ENCODE measurements at regions of chr1 and their contacts with region 1.

Region 1: DNA sequence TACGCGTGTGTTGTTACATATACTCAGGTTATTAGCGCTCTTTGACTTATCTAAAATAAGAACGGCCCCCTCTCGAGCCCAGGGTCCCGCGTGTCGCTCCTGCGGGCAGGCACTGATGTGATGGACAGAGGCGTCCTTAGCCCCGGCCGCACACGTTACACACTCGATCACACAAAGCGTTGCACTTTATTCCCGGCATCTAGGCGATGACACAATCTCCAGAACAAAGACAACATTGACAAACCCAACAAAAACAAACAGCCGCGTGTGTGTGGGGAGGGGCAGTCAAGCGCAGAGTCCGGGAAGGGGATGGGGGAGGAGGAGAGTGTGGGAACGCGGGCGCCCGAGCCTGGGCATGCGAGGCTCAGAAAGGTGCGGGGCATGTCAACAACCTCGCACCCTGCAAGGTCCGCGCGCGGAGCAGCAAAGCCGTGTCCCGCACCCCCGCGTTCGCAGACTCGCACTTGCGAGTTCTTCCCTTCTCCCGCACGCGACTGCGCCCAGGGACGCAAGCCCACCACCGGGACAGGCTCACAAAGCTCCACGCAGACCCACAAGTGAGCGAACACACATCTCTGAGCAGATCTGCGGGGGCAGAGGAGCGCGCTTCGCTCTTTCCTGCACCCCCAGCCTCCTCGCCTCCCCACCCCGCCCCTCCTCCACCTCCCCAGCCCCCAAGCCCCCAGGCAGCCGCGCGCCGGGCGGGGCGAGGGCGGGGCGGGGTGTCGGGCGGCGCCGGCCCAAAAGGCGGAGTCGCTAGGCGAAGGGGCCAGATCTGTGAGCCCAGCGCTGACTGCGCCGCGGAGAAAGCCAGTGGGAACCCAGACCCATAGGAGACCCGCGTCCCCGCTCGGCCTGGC is at the start of gene EFNA1:
- DNase-seq: peak; percentile 78 to 93 (median 86)
- H3K4me3 ChIP-seq: peak within 1 kb of the TSS; percentile 62 to 99 (median 85)
- H3K27ac ChIP-seq: peak within 1 kb of the TSS; percentile 79 to 100 (median 98)
- H3K27me3 ChIP-seq: no peaks in the 10 kb centered on the region
- CTCF ChIP-seq: peak in 8 of 56 donors; percentile 4 to 24 (median 6)
- total RNA-seq, gene EFNA1: 8.7 to 144 (median 30.1) TPM

Region 2: DNA sequence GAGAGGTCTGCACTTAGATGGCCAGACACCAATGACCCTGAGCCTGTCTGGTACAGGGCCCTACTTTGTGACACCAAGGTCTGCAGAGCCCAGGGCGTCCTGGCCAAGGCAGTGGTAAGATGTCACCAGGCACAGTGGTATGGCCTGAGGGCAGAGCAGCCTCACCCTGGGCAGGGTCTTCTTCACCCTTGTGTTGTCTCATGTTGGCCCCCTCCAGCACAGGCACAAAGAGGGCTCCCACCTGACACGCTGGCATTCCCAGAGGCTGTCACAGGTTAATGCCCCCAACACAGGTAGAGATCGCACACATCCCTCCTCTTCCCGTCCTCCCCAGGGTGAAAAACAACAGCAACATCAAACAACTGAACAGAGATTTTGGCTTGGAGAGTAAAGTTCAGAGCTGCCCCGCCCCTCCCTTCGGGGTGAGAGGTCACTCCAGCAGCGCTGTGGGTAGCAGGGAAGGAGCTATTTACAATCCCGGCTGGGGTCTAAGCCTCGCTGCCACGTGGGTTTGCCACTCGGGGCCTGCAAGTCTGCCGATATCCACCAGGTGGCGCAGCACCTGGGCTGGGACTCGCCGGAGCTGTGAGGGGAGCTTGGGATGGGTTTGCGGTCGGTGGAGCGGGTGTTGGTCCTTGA is 36.1 kb before region 1 on chr1:
- intact Hi-C with region 1: loop called in 1 of 2 experiments (anchors 2 kb)
- DNase-seq: peak; percentile 70 to 88 (median 77)
- H3K4me3 ChIP-seq: peak overlapping the region in 36 of 59 donors; percentile 1 to 43 (median 25)
- H3K27ac ChIP-seq: peak overlapping the region in 13 of 59 donors; percentile 13 to 94 (median 58)
- H3K27me3 ChIP-seq: no peaks in the 10 kb centered on the region
- CTCF ChIP-seq: peak; percentile 90 to 100 (median 99)

Region 3: GRCh38 chr1:155167166-155168104 is 40.1 kb after region 1 on chr1:
- intact Hi-C with region 1: loop called (anchors 2 to 5 kb)
- DNase-seq: peak; percentile 90 to 94 (median 92)
- H3K4me3 ChIP-seq: peak overlapping the region; percentile 16 to 71 (median 53)
- H3K27ac ChIP-seq: peak overlapping the region; percentile 34 to 95 (median 88)
- H3K27me3 ChIP-seq: no peaks in the 10 kb centered on the region
- CTCF ChIP-seq: peak; percentile 80 to 98 (median 87)

Region 4: DNA sequence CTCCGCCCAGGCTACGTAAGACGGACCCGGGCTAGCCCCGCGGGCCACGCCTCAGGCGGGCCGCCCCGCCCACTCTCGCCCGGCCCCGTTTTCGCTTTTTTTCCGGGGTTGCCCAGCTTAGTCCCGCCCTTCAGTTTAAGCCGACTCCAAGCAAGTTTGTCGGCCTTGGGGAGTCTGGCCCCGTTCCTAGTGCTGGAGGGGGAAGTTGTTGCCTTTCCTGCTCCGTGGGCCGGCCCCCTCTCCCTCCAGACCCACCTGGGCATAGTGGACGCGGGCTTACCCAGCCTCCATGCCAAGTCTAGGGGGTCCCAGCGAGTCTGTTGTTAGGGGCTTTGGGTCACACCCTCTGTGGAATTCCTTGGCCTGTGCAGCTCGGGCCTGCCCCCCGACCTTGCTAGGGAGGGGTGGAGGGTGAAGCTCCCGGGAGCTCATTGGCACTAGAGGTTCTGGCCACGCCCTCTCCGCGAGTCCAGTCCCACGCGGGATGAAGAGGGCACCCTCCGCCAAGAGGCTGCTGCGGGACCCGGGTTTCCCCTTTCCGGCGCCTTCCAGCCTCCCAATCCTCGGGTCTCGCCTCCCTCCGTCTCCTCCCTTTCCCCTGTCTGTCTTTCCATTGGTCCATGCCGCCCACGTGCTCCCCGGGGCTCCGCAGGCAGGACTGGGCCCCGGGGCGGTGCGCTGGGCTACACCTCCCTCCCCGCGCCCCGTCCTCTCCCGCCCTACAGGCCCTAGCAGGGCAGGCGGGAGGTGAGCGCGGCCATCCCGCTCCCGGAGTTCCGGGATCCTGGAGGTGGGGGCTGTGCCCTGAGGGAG is 196.7 kb after region 1 on chr1:
- intact Hi-C with region 1: no loop called
- DNase-seq: peak; percentile 90 to 97 (median 92)
- H3K4me3 ChIP-seq: peak overlapping the region; percentile 52 to 100 (median 82)
- H3K27ac ChIP-seq: peak overlapping the region; percentile 26 to 97 (median 92)
- H3K27me3 ChIP-seq: no peaks in the 10 kb centered on the region
- CTCF ChIP-seq: peak in 29 of 56 donors; percentile 2 to 53 (median 31)

Measured in dorsolateral prefrontal cortex (tissue), 120 donors.